Activated CD4-positive, alpha-beta T cell treated with anti-CD3 and anti-CD28 coated beads, Interleukin-2, amount 10 ng/mL, durations not matched to agents 24 days and 14 days (primary cell): ENCODE measurements at regions of chr12 and their contacts with region 1.

Region 1: DNA sequence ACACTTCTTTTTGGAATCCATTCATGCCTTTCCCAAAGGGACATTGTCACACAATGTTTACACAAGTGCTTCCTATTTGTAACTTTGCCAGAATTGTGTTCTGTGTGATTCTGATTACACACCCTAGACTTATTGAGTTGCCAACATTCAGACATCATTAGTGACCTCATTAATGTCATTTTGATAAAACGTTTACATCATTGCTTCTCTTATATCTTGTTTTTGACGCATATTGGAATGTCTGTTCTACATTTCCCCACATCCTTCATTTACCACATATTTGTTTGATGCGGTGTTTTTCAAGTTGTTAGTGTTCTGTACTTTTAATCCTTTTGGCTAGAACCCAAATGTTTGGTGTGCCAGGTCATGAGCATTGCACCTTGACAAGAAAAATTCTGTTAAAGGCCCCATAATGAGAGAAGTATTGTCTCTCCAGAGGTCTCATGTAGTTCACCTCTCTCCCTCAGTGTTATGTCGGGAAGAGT is 305.5 kb downstream of the AEBP2 start:
- DNase-seq: no peak
- H3K4me3 Mint-ChIP-seq: no peak overlapping the region
- H3K27ac Mint-ChIP-seq: no peak overlapping the region
- H3K4me1 Mint-ChIP-seq: no peaks in the 10 kb centered on the region
- H3K27me3 Mint-ChIP-seq: peaks cover 7% of the 10 kb centered on the region

Region 2: GRCh38 chr12:18872770-18873169 is 872.0 kb before region 1 on chr12:
- intact Hi-C with region 1: no loop called
- DNase-seq: no peak
- H3K4me3 Mint-ChIP-seq: no peak overlapping the region
- H3K27ac Mint-ChIP-seq: no peak overlapping the region
- H3K4me1 Mint-ChIP-seq: peaks cover 5% of the 10 kb centered on the region
- H3K27me3 Mint-ChIP-seq: no peaks in the 10 kb centered on the region

Region 3: GRCh38 chr12:19572920-19573558 is 171.7 kb before region 1 on chr12:
- intact Hi-C with region 1: loop called (anchors 10 kb)
- DNase-seq: peak; percentile 77
- H3K4me3 Mint-ChIP-seq: no peak overlapping the region
- H3K27ac Mint-ChIP-seq: no peak overlapping the region
- H3K4me1 Mint-ChIP-seq: peaks cover 2% of the 10 kb centered on the region
- H3K27me3 Mint-ChIP-seq: no peaks in the 10 kb centered on the region

Region 4: DNA sequence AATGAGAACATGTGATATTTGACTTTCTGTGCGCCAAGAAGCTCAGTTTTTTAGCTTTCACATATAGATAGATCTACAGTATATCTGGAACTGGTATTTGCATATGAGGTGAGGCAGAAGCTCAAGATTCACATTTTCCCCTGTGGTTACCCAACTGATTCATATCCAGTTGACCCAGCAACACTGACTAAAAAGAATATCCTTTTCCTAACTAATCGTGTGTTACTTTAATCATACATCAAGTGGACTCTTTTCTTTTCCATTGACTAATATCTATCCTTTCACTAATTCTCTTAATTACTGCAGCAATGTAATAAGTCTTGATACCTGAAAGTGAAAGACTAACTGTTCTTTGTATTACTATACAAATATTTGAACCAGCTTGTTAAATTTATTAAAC is 69.4 kb before region 1 on chr12:
- intact Hi-C with region 1: no loop called
- DNase-seq: no peak
- H3K4me3 Mint-ChIP-seq: no peak overlapping the region
- H3K27ac Mint-ChIP-seq: peak overlapping the region; percentile 21
- H3K4me1 Mint-ChIP-seq: peaks cover 40% of the 10 kb centered on the region
- H3K27me3 Mint-ChIP-seq: peaks cover 2% of the 10 kb centered on the region